HCT116 (cell line): ENCODE measurements at regions of chr5 and their contacts with region 1.

Region 1: DNA sequence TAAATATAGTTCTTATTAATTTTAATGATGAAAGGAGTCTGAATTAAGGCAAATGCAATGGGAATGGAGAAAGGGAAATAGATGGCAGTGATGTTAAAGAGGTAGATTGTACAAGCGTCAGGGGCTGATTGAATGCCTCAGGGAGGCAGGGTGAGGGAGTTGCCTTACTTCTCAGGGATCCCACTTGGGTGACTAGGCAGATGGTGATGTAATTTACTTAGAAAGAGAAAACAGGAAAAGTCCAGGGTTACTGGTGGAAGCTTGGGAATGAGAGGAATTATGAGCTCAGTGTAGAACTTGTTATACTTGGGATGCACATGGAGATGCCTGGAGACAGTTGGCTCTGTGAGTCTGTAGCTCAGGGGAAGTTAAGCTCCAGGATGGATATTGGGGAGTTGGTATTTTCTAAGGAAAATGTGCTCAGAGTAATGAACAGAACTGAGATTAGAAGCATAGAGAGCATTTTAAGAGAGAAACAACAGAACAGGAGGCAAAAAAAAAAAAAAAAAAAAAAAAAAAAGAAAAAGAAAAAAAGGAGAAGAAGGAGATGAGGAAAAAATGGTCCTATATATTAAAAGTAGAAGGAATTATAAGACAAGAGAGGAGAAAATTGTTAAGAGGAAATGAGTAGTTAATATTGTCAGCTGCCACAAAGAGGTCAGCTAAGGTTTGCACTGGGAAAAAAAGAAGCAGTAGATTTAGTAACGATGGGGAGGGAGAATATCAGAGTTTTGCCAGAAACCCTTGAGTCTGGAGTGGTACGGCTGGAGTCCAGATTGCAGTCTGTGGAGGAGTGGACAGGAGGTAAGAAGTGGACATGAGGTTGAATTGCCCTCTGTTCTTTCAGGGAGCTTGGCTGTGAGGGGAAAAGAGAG is 88.0 kb upstream of the ELL2 start:
- DNase-seq: no peak
- ATAC-seq: no peak
- H3K4me3 ChIP-seq: no peak overlapping the region
- H3K27ac ChIP-seq: no peak overlapping the region
- H3K4me1 ChIP-seq: no peaks in the 10 kb centered on the region
- H3K27me3 ChIP-seq: no peaks in the 10 kb centered on the region
- CTCF ChIP-seq: no peak
- POLR2A ChIP-seq: no peak
- RAD21 ChIP-seq: no peak

Region 2: DNA sequence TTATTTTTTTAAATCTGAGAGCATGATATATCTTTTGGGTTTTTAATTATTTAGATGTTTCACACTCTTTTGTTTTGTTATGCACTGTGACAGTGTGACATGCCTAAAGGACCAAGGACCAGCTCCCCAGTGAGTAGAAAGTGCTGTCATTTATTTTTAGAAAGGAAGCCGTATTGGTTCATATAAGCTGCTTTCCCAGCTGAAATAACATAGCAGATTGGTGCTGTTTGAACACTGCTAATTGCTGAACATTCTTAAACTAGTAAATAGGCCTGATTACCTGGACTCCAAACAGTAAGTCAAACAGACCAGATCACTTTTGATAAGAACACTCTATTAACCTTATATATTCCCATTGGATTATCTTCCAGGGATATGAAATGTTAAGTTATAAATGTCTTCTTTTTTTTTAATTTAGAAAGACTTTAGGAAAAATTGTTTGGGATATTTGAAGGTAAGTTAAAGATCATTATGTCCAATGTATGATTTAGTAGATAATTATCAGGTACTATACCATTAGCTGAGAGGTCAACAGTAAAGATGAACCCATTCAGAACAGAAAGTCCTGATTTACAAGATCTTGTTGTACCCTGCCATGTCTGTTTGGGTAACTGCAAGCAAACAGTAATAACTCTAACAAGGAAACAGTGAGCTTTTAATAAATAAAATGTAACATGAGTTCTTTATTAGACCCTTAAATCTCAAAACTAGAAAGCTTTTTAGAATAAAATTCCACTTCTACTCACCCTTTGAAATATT is 60.2 kb before region 1 on chr5:
- CTCF ChIA-PET with region 1: no interaction called
- POLR2A ChIA-PET with region 1: no interaction called
- RAD21 ChIA-PET with region 1: no interaction called
- intact Hi-C with region 1: loop called (anchors 10 kb)
- DNase-seq: no peak
- ATAC-seq: no peak
- H3K4me3 ChIP-seq: no peak overlapping the region
- H3K27ac ChIP-seq: no peak overlapping the region
- H3K4me1 ChIP-seq: 0 out of 4 replicates have a peak, but pooled peaks cover 0 to 1% of the 10 kb centered on the region in 2 experiments
- H3K27me3 ChIP-seq: no peaks in the 10 kb centered on the region
- CTCF ChIP-seq: no peak
- POLR2A ChIP-seq: no peak
- RAD21 ChIP-seq: no peak